Right cardiac atrium (tissue), 5 donors: ENCODE measurements at regions of chr20 and their contacts with region 1.

Region 1: GRCh38 chr20:31674895-31675827 is 37.4 kb downstream of the COX4I2 start:
- DNase-seq: peak; percentile 81 to 87 (median 82)
- ATAC-seq: peak; percentile 62 to 85
- H3K4me3 ChIP-seq: no peak overlapping the region
- H3K27ac ChIP-seq: peak overlapping the region; percentile 97
- H3K4me1 ChIP-seq: peaks cover 58% of the 10 kb centered on the region
- H3K27me3 ChIP-seq: no peaks in the 10 kb centered on the region

Region 2: DNA sequence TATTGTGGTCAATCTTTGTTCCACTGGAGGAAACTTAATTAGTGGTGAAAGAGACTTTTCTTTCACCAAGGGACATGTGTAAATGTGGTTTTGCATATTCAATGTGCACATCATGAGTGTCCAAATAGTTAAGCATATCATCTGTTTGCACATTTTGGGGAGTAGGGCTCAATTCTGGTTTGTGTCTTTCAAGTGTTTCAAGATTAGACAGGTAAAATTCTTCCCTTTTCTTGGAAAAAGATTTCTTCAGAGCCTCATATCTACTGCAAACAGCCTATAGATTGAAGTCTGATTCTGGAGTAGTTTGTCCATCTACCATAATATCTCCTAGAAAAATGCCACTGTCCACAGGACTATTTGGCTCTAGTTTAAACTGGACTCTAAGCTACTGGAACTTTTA is 333.7 kb before region 1 on chr20:
- intact Hi-C with region 1: no loop called
- DNase-seq: no peak
- ATAC-seq: no peak
- H3K4me3 ChIP-seq: no peak overlapping the region
- H3K27ac ChIP-seq: no peak overlapping the region
- H3K4me1 ChIP-seq: no peaks in the 10 kb centered on the region
- H3K27me3 ChIP-seq: no peaks in the 10 kb centered on the region

Region 3: DNA sequence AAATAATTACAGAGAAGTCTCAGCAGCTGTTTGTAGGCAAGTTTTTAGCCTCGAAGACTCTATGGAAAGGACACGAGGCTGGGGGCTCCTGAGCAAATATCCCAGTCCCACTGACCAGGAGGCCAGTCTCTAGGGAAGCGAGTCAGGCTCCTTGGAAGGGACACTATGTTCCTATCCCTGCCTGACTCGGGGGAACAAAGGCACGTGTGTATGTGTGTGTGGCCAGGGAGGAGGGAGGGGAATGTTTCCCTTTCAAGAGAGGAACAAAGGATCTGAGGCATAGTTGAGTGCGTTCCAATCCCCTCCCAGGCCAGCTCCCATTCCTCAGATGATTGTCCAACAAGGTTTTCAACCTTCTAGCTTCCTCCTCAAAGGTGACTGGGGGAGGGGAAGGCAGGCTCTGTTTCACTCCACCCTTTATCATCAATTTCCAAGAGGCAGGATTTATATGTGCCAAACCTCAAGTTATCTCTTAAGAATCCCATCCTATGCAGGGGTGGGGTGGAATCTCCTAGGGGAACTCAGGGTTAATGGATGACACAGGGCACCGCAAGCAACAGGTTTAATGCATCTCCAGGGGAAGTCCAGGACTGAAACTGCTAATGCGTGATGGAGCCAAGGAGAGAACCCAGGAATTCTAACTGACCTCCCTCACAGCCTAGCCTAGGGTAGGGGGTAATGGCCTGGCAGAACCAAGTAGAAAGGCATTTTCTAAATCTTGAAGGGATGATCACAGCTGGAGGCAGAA is 37.6 kb after region 1 on chr20:
- intact Hi-C with region 1: loop called in 1 of 4 experiments (anchors 5 kb)
- DNase-seq: peak; percentile 84 to 90 (median 87)
- ATAC-seq: peak; percentile 93 to 95
- H3K4me3 ChIP-seq: peak overlapping the region; percentile 1
- H3K27ac ChIP-seq: peak overlapping the region; percentile 92
- H3K4me1 ChIP-seq: peaks cover 43% of the 10 kb centered on the region
- H3K27me3 ChIP-seq: no peaks in the 10 kb centered on the region

Region 4: GRCh38 chr20:31760519-31761240 is 85.5 kb after region 1 on chr20:
- intact Hi-C with region 1: no loop called
- DNase-seq: no peak
- ATAC-seq: no peak
- H3K4me3 ChIP-seq: no peak overlapping the region
- H3K27ac ChIP-seq: no peak overlapping the region
- H3K4me1 ChIP-seq: no peaks in the 10 kb centered on the region
- H3K27me3 ChIP-seq: no peaks in the 10 kb centered on the region